ENCODE measurements at regions of chr11 and their contacts with region 1.

Region 1: GRCh38 chr11:57712256-57713150 is at the start of gene TMX2:
- DNase-seq: peak; percentile 89 to 97 (median 94)
- H3K4me3 ChIP-seq: peak within 1 kb of the TSS; percentile 92 to 96
- H3K4me3 Mint-ChIP-seq: peak within 1 kb of the TSS; percentile 93 to 99 (median 98)
- H3K27ac ChIP-seq: peak within 1 kb of the TSS; percentile 96
- H3K27ac Mint-ChIP-seq: peak within 1 kb of the TSS; percentile 91 to 99 (median 98)
- H3K4me1 ChIP-seq: peaks cover 34% of the 10 kb centered on the region
- H3K4me1 Mint-ChIP-seq: peaks cover 30 to 64% (median 43%) of the 10 kb centered on the region in 4 donors
- H3K27me3 ChIP-seq: no peaks in the 10 kb centered on the region
- H3K27me3 Mint-ChIP-seq: no peaks in the 10 kb centered on the region
- total RNA-seq, gene TMX2: 63.6 to 67.1 TPM

Region 2: DNA sequence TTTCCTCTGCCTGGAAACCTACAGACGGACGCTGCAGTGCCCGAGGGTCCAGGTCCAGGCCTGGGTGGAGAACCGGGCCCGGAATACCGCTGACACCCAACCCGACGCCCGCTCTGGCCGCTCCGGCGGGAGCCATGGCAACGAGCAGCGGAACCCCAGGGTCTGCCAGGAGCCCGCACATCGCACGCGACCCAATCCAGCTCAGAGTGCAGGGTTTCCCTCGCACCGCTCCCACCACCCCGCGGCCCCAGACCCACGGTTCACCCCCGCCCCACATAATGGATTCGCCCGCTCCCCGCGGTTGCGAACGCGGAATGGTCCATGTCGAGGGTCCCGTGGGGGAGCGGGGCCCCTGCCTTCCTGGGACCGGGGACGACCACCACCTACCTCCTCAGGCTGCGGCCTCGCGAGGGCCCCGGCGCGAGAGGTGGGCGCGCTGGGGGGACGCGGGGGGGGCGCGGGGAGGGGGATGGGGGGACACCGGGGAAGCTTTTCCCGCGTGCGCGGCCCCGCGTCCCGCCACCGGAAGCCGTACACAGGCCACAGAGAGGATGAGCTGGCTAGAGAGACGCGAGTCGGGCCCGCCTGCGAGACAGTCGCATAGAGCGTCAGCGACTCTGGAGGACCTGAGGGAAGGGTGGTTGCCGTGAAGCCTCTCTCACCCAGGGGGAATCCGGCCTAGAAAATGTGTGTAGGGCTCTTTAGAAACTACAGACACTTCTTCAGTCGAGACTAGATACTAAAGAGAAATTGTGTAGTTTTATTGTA is 377.0 kb before region 1 on chr11 and contains the start of gene SSRP1:
- CTCF ChIA-PET with region 1: no interaction called
- POLR2A ChIA-PET with region 1: interaction called, 5 read pairs
- intact Hi-C with region 1: loop called (anchors 1 kb)
- DNase-seq: peak; percentile 87 to 92 (median 88)
- H3K4me3 ChIP-seq: peak within 1 kb of the TSS; percentile 55 to 87
- H3K4me3 Mint-ChIP-seq: peak within 1 kb of the TSS; percentile 86 to 98 (median 94)
- H3K27ac ChIP-seq: peak within 1 kb of the TSS; percentile 85
- H3K27ac Mint-ChIP-seq: peak within 1 kb of the TSS; percentile 96 to 99 (median 98)
- H3K4me1 ChIP-seq: peaks cover 25% of the 10 kb centered on the region
- H3K4me1 Mint-ChIP-seq: peaks cover 23 to 29% (median 25%) of the 10 kb centered on the region in 4 donors
- H3K27me3 ChIP-seq: no peaks in the 10 kb centered on the region
- H3K27me3 Mint-ChIP-seq: no peaks in the 10 kb centered on the region
- total RNA-seq, gene SSRP1: 69.0 to 74.3 TPM

Region 3: GRCh38 chr11:57567515-57568329 is 144.8 kb before region 1 on chr11 and contains the start of gene UBE2L6:
- CTCF ChIA-PET with region 1: interaction called, 7 read pairs
- POLR2A ChIA-PET with region 1: interaction called, 5 read pairs
- intact Hi-C with region 1: loop called (anchors 1 kb)
- DNase-seq: peak; percentile 59 to 86 (median 66)
- H3K4me3 ChIP-seq: peak within 1 kb of the TSS; percentile 72 to 81
- H3K4me3 Mint-ChIP-seq: peak within 1 kb of the TSS; percentile 94 to 100 (median 99)
- H3K27ac ChIP-seq: peak within 1 kb of the TSS; percentile 93
- H3K27ac Mint-ChIP-seq: peak within 1 kb of the TSS; percentile 97 to 99 (median 98)
- H3K4me1 ChIP-seq: peaks cover 34% of the 10 kb centered on the region
- H3K4me1 Mint-ChIP-seq: peaks cover 27 to 65% (median 42%) of the 10 kb centered on the region in 4 donors
- H3K27me3 ChIP-seq: no peaks in the 10 kb centered on the region
- H3K27me3 Mint-ChIP-seq: no peaks in the 10 kb centered on the region
- total RNA-seq, gene UBE2L6: 79.7 to 82.9 TPM

Region 4: GRCh38 chr11:57657194-57658022 is 55.1 kb before region 1 on chr11 and contains the start of gene CLP1:
- CTCF ChIA-PET with region 1: no interaction called
- POLR2A ChIA-PET with region 1: interaction called, 3 read pairs
- intact Hi-C with region 1: loop called (anchors 1 kb)
- DNase-seq: peak; percentile 98 to 99 (median 98)
- H3K4me3 ChIP-seq: peak within 1 kb of the TSS; percentile 91 to 96
- H3K4me3 Mint-ChIP-seq: peak within 1 kb of the TSS; percentile 94 to 100 (median 98)
- H3K27ac ChIP-seq: peak within 1 kb of the TSS; percentile 84
- H3K27ac Mint-ChIP-seq: peak within 1 kb of the TSS; percentile 86 to 100 (median 97)
- H3K4me1 ChIP-seq: peaks cover 16% of the 10 kb centered on the region
- H3K4me1 Mint-ChIP-seq: peaks cover 15 to 30% (median 27%) of the 10 kb centered on the region in 4 donors
- H3K27me3 ChIP-seq: no peaks in the 10 kb centered on the region
- H3K27me3 Mint-ChIP-seq: no peaks in the 10 kb centered on the region
- total RNA-seq, gene CLP1: 14.1 to 16.0 TPM

Region 5: DNA sequence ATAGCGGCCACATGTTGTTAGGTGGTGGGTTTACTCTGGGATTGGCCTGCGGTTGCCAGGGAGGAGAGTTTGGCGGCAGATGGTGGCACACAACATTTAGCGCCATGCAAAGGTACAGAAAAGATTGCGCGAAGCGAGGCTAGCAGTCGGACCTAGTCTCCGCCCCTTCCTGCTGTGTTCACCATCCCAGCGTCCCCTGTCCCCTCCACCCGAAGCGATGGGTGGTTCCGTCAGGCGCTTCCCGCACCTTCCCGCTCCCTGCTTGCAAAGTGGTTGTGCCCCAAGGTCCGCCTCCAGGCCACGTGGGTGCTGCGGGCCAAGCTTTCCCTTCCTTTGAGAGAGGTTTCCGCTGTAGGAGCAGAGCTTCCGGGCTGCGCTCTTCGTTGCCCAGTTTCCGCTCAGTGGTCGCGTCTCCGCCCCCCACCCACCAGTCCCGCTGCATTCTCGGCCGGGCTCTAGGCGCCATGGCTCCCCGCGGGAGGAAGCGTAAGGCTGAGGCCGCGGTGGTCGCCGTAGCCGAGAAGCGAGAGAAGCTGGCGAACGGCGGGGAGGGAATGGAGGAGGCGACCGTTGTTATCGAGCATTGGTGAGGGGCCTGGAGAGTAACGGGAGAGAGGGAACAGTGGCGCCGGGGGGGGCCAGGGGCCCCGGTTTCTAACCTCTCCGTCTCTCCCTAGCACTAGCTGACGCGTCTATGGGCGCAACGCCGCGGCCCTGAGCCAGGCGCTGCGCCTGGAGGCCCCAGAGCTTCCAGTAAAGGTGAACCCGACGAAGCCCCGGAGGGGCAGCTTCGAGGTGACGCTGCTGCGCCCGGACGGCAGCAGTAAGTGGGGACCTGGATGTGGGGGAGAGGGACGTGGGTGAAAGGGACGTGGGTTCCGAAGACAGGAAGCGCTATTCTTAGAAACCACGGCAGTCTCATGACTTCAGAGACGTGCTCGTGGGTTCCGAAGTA is 28.9 kb after region 1 on chr11 and contains the start of gene SELENOH:
- CTCF ChIA-PET with region 1: interaction called, 3 read pairs
- POLR2A ChIA-PET with region 1: interaction called, 29 read pairs
- intact Hi-C with region 1: loop called (anchors 1 kb)
- DNase-seq: peak; percentile 90 to 96 (median 91)
- H3K4me3 ChIP-seq: peak within 1 kb of the TSS; percentile 77 to 80
- H3K4me3 Mint-ChIP-seq: peak within 1 kb of the TSS; percentile 90 to 100 (median 98)
- H3K27ac ChIP-seq: peak within 1 kb of the TSS; percentile 82
- H3K27ac Mint-ChIP-seq: peak within 1 kb of the TSS; percentile 96 to 100 (median 99)
- H3K4me1 ChIP-seq: peaks cover 26% of the 10 kb centered on the region
- H3K4me1 Mint-ChIP-seq: peaks cover 18 to 36% (median 28%) of the 10 kb centered on the region in 4 donors
- H3K27me3 ChIP-seq: no peaks in the 10 kb centered on the region
- H3K27me3 Mint-ChIP-seq: no peaks in the 10 kb centered on the region
- total RNA-seq, gene SELENOH: 102 to 113 TPM

Region 6: GRCh38 chr11:57792060-57792541 is 79.6 kb after region 1 on chr11:
- CTCF ChIA-PET with region 1: no interaction called
- POLR2A ChIA-PET with region 1: interaction called, 3 read pairs
- intact Hi-C with region 1: loop called (anchors 1 kb)
- DNase-seq: peak; percentile 84 to 93 (median 88)
- H3K4me3 ChIP-seq: peak overlapping the region in 1 of 2 donors; percentile 23
- H3K4me3 Mint-ChIP-seq: peak overlapping the region; percentile 58 to 87 (median 76)
- H3K27ac ChIP-seq: peak overlapping the region; percentile 61
- H3K27ac Mint-ChIP-seq: peak overlapping the region; percentile 84 to 99 (median 97)
- H3K4me1 ChIP-seq: peaks cover 35% of the 10 kb centered on the region
- H3K4me1 Mint-ChIP-seq: peaks cover 26 to 39% (median 32%) of the 10 kb centered on the region in 4 donors
- H3K27me3 ChIP-seq: no peaks in the 10 kb centered on the region
- H3K27me3 Mint-ChIP-seq: no peaks in the 10 kb centered on the region

Region 7: DNA sequence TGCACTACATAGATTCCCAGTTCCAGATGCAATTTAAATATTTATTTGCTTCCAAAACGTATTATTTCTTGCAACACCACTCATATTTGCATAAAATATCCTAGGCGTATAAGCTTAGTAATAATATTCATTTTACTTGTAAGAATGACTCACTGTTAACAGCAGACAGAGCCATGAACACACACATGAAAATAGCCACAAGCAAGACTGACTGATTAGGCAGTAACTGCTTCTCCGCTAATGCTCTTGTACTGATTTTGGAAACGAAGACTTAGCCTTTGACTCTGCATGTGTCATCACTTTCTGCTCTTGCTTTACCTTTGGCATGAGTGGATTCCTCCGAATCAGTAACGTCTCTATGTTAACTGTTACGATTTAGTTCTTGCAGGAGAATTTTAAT is 510.2 kb after region 1 on chr11:
- CTCF ChIA-PET with region 1: no interaction called
- POLR2A ChIA-PET with region 1: no interaction called
- intact Hi-C with region 1: no loop called
- DNase-seq: no peak
- H3K4me3 ChIP-seq: no peak overlapping the region
- H3K4me3 Mint-ChIP-seq: no peak overlapping the region
- H3K27ac ChIP-seq: no peak overlapping the region
- H3K27ac Mint-ChIP-seq: no peak overlapping the region
- H3K4me1 ChIP-seq: no peaks in the 10 kb centered on the region
- H3K4me1 Mint-ChIP-seq: no peaks in the 10 kb centered on the region
- H3K27me3 ChIP-seq: no peaks in the 10 kb centered on the region
- H3K27me3 Mint-ChIP-seq: peaks cover 3 to 4% of the 10 kb centered on the region in 2 donors

Region 8: DNA sequence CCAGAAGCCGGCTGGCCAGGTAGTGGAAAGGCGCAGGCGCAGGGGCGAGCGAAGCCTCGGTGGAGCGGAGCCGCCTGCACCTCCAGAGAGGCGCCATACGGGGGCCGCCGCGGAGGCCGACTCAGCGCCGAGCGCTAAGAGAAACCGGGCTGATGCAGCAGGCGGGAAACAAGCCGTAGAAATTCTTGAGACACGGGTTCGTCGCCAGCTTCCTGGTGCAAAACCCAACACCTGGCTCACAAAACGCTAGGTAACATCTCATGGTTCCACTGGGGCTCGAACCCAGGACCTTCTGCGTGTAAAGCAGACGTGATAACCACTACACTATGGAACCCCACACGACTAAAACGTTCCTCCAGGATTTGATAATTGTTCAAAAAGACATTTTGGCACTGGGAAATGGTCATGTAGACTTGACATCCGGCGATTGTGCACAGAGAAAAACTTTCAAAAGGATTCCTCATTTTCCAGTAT is 1837.9 kb after region 1 on chr11:
- CTCF ChIA-PET with region 1: no interaction called
- POLR2A ChIA-PET with region 1: no interaction called
- intact Hi-C with region 1: loop called (anchors 10 kb)
- DNase-seq: peak; percentile 86 to 94 (median 87)
- H3K4me3 ChIP-seq: peak overlapping the region; percentile 19 to 61
- H3K4me3 Mint-ChIP-seq: peak overlapping the region; percentile 86 to 96 (median 88)
- H3K27ac ChIP-seq: peak overlapping the region; percentile 51
- H3K27ac Mint-ChIP-seq: peak overlapping the region; percentile 92 to 100 (median 94)
- H3K4me1 ChIP-seq: peaks cover 14% of the 10 kb centered on the region
- H3K4me1 Mint-ChIP-seq: peaks cover 16 to 52% (median 26%) of the 10 kb centered on the region in 4 donors
- H3K27me3 ChIP-seq: no peaks in the 10 kb centered on the region
- H3K27me3 Mint-ChIP-seq: peaks cover 0 to 9% of the 10 kb centered on the region in 2 donors